ENCODE measurements at regions of chr18 and their contacts with region 1.

Region 1: GRCh38 chr18:35231052-35231451 is 9.8 kb upstream of the ZNF397 start:
- DNase-seq: peak; percentile 71 to 94
- H3K4me3 ChIP-seq: no peak overlapping the region
- CTCF ChIP-seq: peak in 1 of 3 donors; percentile 42
- POLR2A ChIP-seq: no peak

Region 2: DNA sequence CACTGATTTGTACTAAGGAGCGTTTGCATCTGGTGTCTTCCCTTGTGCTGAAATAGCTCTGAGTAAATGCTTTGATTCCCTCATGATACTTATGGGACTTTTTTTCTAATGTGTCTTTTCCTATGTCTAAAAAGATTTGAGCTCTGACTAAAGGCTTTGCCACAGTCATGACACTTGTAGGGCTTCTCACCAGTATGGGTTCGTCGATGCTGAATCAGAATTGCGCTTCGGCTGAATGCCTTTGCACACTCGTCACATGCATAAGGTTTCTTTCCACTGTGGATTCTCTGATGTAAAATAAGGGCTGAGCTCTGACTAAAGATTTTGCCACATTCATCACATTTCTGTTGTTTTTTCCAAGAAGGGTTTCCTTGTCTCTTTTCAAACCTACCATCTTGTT is 138.1 kb after region 1 on chr18:
- intact Hi-C with region 1: loop called (anchors 10 kb)
- DNase-seq: no peak
- H3K4me3 ChIP-seq: no peak overlapping the region
- CTCF ChIP-seq: no peak
- POLR2A ChIP-seq: no peak

Region 3: GRCh38 chr18:35573531-35573930 is 342.5 kb after region 1 on chr18:
- intact Hi-C with region 1: no loop called
- DNase-seq: no peak
- H3K4me3 ChIP-seq: no peak overlapping the region
- CTCF ChIP-seq: no peak
- POLR2A ChIP-seq: no peak